ENCODE measurements at regions of chr12 and their contacts with region 1.

Region 1: DNA sequence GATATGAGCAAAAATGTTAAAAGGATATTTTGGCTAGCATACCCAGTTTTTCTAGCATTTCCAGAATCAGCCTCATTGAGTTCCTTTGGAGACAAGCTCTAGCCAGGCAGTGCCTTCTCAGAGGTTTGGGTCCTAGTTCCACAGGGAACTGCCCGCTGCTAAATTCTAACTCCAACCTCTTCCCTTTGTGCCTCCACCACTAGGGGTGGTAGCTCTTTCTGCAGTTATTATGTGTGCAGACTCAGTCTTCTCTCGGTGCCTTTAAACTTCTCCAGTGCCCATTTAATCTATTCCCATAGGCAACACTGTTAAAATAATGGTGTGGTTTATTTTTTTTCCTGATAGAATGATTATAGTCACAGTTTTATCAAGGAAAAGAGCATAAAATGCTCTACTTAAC is 21.5 kb upstream of the SLC25A3 start:
- DNase-seq: no peak
- H3K4me3 ChIP-seq: no peak overlapping the region
- H3K4me3 Mint-ChIP-seq: no peak overlapping the region
- H3K27ac ChIP-seq: no peak overlapping the region
- H3K27ac Mint-ChIP-seq: no peak overlapping the region
- H3K4me1 ChIP-seq: no peaks in the 10 kb centered on the region
- H3K4me1 Mint-ChIP-seq: peaks cover 0 to 1% (median under 1%) of the 10 kb centered on the region in 3 donors
- H3K27me3 ChIP-seq: no peaks in the 10 kb centered on the region
- H3K27me3 Mint-ChIP-seq: no peaks in the 10 kb centered on the region

Region 2: DNA sequence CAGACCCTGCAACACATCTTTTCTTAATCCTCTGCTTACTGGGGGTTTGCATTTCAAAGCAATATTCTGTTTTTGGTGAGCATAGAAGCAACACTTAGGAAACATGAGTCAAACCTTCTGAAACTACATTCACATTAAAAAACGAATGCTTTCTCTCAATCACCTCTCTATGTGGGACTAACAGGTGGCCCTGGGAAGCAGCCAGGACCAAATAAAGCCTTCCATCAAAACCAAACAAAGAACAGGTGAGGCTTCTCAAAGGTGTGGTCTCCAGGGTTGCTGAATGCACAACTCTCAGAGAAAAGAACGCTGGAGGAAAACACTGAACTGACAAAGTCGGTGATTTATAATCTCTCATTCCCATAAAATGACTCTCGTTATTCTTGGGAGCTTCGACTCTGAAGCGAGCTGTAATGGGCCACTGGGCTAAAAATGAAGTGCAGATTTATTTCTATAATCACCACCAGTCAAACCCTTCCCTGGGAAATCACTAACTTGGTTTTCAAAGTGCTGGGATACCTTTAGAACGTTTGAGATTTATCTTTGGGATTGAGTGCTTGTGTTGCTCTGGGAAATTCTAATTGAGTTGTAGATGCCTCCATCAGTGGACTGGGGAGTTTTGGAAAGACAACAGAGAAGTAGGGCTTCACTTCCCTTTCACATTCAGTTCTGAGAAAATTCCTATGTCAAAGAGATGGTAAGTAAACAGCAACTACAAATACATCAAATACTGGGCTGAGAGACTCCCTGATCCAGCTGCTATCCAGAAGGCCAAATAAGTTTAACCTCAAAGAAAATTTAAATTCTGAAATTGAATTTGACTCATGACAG is 318.6 kb before region 1 on chr12:
- CTCF ChIA-PET with region 1: no interaction called
- POLR2A ChIA-PET with region 1: no interaction called
- DNase-seq: no peak
- H3K4me3 ChIP-seq: no peak overlapping the region
- H3K4me3 Mint-ChIP-seq: no peak overlapping the region
- H3K27ac ChIP-seq: no peak overlapping the region
- H3K27ac Mint-ChIP-seq: peak overlapping the region in 1 of 8 donors; percentile 12
- H3K4me1 ChIP-seq: no peaks in the 10 kb centered on the region
- H3K4me1 Mint-ChIP-seq: no peaks in the 10 kb centered on the region
- H3K27me3 ChIP-seq: no peaks in the 10 kb centered on the region
- H3K27me3 Mint-ChIP-seq: peaks cover 0 to 2% of the 10 kb centered on the region in 2 donors

Region 3: DNA sequence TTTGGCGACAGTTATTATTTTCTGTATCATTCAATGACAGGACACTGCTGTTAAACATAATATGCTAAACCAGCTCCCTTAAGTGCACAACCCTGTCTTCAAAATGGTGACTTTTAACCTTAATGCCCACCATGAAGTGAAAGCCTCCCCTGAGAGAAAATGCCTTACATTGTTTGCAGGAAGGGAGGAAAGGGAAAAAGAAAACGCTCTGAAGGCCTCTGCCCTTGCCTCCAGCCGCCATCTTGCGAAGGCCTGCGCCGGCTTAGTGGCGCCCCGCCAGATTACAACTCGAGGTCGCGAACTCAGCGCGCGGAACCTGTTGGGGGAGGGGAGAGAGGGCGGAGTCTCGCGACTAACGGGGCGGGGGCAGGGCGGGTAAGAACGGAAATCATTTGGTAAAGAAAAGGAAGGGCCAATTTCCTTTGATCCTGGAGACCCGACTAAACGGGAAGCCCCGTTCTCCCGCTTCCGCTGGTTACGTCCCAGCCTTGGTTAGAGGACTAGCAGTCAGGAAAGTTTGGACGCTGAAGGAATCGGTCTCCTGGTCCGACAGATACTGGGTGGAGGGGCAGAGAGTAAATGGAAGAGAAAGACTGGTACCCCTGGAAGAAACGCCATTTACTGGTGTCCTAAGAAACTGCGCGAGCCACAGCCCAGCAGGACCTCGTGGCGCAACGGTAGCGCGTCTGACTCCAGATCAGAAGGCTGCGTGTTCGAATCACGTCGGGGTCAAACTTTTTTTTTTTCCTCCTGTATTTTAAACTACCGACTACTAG is 68.2 kb before region 1 on chr12:
- CTCF ChIA-PET with region 1: no interaction called
- POLR2A ChIA-PET with region 1: no interaction called
- DNase-seq: peak; percentile 87 to 97 (median 92)
- H3K4me3 ChIP-seq: peak overlapping the region; percentile 97
- H3K4me3 Mint-ChIP-seq: peak overlapping the region; percentile 93 to 99 (median 98)
- H3K27ac ChIP-seq: peak overlapping the region; percentile 94
- H3K27ac Mint-ChIP-seq: peak overlapping the region; percentile 97 to 100 (median 98)
- H3K4me1 ChIP-seq: peaks cover 8% of the 10 kb centered on the region
- H3K4me1 Mint-ChIP-seq: peaks cover 23 to 35% (median 29%) of the 10 kb centered on the region in 3 donors
- H3K27me3 ChIP-seq: no peaks in the 10 kb centered on the region
- H3K27me3 Mint-ChIP-seq: peaks cover 3 to 16% of the 10 kb centered on the region in 2 donors

Region 4: GRCh38 chr12:98530068-98530467 is 41.9 kb before region 1 on chr12:
- CTCF ChIA-PET with region 1: no interaction called
- POLR2A ChIA-PET with region 1: no interaction called
- DNase-seq: no peak
- H3K4me3 ChIP-seq: no peak overlapping the region
- H3K4me3 Mint-ChIP-seq: no peak overlapping the region
- H3K27ac ChIP-seq: no peak overlapping the region
- H3K27ac Mint-ChIP-seq: peak overlapping the region in 4 of 8 donors; percentile 6 to 54 (median 38)
- H3K4me1 ChIP-seq: peaks cover 4% of the 10 kb centered on the region
- H3K4me1 Mint-ChIP-seq: peaks cover 24 to 52% (median 44%) of the 10 kb centered on the region in 3 donors
- H3K27me3 ChIP-seq: no peaks in the 10 kb centered on the region
- H3K27me3 Mint-ChIP-seq: no peaks in the 10 kb centered on the region

Region 5: DNA sequence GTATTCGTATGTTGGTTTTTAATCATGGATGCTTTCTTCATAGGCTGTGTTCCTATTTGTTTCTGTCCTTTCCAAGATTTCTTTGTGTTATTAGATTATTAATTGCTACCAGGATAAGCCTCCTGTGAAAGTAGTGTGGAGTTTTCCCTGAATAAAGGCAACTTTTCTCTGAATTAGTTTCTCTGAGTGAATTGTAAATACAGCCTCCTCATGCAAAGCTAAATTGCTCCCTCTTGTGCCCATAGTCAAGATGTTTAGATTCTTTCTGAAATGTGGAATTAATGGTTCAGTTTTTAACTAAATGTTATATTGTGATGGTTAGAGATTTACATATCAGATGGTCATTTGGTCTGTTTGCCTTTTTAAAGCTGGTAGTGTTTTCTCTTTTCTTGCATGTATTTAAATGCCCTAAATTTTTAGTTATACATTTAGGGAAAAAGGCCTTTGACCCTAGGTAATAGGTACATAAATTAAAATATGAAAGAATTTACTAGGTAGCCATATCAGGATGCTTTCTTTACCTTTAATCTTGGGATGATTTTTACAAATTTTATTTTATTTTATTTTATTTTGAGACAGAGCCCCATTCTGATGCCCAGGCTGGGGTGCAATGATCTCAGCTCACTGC is 82.0 kb after region 1 on chr12:
- CTCF ChIA-PET with region 1: interaction called, 30 read pairs
- POLR2A ChIA-PET with region 1: no interaction called
- DNase-seq: peak in 2 of 5 donors; percentile 39 to 49
- H3K4me3 ChIP-seq: no peak overlapping the region
- H3K4me3 Mint-ChIP-seq: no peak overlapping the region
- H3K27ac ChIP-seq: no peak overlapping the region
- H3K27ac Mint-ChIP-seq: no peak overlapping the region
- H3K4me1 ChIP-seq: no peaks in the 10 kb centered on the region
- H3K4me1 Mint-ChIP-seq: peaks cover 12 to 23% (median 16%) of the 10 kb centered on the region in 3 donors
- H3K27me3 ChIP-seq: no peaks in the 10 kb centered on the region
- H3K27me3 Mint-ChIP-seq: no peaks in the 10 kb centered on the region

Measured in CD8-positive, alpha-beta memory T cell (primary cell).